CD8-positive, alpha-beta T cell (primary cell): ENCODE measurements at regions of chr6 and their contacts with region 1.

Region 1: DNA sequence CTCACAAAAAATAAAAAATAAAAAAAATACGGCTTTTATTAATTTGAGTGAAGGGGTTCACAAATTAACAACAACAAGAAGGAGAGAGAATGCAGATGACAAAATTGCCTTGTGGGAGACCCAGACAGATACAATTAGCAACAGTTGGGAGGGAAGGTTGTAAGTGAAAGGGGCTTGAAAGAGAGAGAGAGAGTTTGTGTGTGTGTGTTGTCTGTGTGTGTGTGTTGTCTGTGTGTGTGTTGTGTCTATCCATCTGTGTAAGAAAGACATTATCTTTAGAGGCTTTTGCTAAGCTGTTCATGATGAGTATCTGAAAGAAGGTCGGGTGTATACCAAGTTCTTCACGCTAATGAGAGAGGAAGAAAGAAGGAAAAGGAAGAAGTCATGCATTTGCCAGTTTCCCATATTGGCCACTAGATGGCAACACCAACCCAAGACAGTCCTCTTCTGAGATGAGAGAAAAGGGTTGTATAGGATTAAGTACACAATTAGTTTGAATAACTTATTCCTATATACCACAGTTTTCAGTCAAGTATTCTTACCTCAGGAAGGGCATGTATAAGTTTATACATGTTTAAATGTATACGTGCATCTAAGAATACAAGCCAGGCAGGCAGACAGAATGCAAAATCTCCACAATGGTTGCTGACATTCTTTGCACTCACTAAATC is 63.7 kb upstream of the CD2AP start:
- DNase-seq: peak in 7 of 9 experiments; percentile 19 to 78 (median 37)
- ATAC-seq: peak; percentile 79
- H3K4me3 ChIP-seq: peak overlapping the region; percentile 38 to 48
- H3K4me3 Mint-ChIP-seq: peak overlapping the region; percentile 88
- H3K27ac ChIP-seq: peak overlapping the region in 1 of 2 experiments; percentile 31
- H3K27ac Mint-ChIP-seq: peak overlapping the region; percentile 92
- H3K4me1 ChIP-seq: peaks cover 10% of the 10 kb centered on the region
- H3K4me1 Mint-ChIP-seq: peaks cover 17% of the 10 kb centered on the region
- H3K27me3 ChIP-seq: no peaks in the 10 kb centered on the region
- H3K27me3 Mint-ChIP-seq: no peaks in the 10 kb centered on the region
- CTCF ChIP-seq: peak; percentile 87

Region 2: DNA sequence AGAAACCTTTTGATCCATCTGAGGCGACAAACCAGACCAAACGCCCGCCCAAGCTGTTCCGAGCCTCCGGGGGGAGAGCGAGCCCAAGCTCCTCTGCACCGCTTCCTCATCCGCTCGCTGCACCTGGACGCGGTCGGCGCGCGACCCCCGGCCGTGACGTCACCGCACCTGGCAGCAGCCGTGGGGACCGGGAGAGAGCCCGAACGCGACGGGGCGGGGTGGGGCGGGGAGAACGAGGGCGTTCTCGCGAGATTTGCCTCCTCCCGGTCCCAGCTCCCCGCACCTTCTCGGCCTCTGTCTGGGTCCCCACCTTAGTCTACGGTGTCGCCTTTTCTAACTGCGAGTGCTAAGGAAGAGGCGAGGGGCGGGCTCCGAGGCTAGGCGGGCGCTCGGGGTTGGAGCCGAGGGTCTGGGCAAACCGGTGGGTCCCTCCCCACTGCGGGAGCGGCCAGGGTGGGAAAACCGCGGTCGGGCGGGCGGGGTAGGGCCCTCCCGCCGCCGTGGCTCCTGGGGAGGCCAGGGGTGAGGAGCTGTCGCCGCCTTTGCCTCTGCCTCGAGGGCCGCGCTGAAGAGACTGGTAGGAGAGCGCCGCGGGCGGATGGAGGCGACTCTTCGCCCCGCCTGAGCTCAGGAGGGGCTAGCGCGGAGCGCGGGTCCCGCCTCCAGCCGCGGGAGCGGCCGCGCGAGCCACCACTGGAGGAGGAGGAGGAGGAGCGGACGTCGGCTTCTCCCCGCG is 63.8 kb after region 1 on chr6 and contains the start of gene CD2AP:
- CTCF ChIA-PET with region 1: interaction called, 12 read pairs
- POLR2A ChIA-PET with region 1: interaction called, 22 read pairs
- intact Hi-C with region 1: loop called (anchors 1 to 2 kb)
- DNase-seq: peak; percentile 86 to 97 (median 94)
- ATAC-seq: peak; percentile 82
- H3K4me3 ChIP-seq: peak within 1 kb of the TSS; percentile 68 to 76
- H3K4me3 Mint-ChIP-seq: peak within 1 kb of the TSS; percentile 97
- H3K27ac ChIP-seq: peak within 1 kb of the TSS; percentile 89 to 94
- H3K27ac Mint-ChIP-seq: peak within 1 kb of the TSS; percentile 96
- H3K4me1 ChIP-seq: peaks cover 24% of the 10 kb centered on the region
- H3K4me1 Mint-ChIP-seq: peaks cover 46% of the 10 kb centered on the region
- H3K27me3 ChIP-seq: no peaks in the 10 kb centered on the region
- H3K27me3 Mint-ChIP-seq: no peaks in the 10 kb centered on the region
- CTCF ChIP-seq: no peak
- total RNA-seq, gene CD2AP: 43.0 to 51.1 TPM

Region 3: DNA sequence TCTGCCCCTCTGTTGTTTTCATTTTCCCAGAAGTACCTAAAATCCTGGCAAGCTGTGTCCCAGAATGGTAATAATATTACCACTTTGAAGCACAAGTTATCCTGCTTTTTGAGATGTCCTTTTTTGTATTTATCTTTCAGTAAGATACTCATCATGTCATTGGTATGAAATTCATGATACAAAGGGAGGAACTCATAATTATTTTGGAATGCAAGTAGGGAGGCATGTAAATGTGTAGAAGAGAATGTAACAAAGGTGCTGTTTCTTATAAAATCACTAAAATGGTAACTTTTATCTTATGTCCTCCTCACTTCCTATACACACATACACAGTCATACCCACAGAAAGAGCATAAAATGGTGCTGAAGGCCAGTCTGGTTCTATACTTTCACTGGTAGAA is 173.6 kb after region 1 on chr6:
- CTCF ChIA-PET with region 1: no interaction called
- POLR2A ChIA-PET with region 1: no interaction called
- intact Hi-C with region 1: loop called in 1 of 2 experiments (anchors 5 kb)
- DNase-seq: no peak
- ATAC-seq: no peak
- H3K4me3 ChIP-seq: no peak overlapping the region
- H3K4me3 Mint-ChIP-seq: no peak overlapping the region
- H3K27ac ChIP-seq: no peak overlapping the region
- H3K27ac Mint-ChIP-seq: no peak overlapping the region
- H3K4me1 ChIP-seq: no peaks in the 10 kb centered on the region
- H3K4me1 Mint-ChIP-seq: no peaks in the 10 kb centered on the region
- H3K27me3 ChIP-seq: no peaks in the 10 kb centered on the region
- H3K27me3 Mint-ChIP-seq: no peaks in the 10 kb centered on the region
- CTCF ChIP-seq: no peak

Region 4: DNA sequence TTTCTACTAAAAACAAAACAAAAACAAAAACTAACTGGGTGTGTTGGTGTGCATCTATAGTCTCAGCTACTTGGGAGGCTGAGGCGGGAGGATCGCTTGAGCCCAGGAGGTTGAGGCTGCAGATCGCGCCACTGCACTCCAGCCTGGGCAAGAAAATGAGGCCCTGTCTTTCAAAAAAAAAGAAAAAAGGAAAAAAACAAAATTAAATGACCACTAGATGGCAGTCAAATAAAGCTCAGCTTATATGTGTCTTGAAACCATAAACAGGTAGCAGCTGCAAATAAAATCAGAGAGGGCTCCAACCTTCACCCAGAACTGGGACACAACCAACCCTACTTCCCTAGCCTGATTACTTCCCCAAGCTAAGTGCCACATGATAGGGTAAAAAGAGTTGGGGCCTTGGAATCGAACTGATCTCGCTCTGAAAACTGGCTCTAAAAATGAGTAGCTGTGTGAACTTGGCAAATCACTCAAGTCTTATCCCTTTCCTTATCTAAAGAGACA is 217.4 kb after region 1 on chr6:
- CTCF ChIA-PET with region 1: interaction called, 6 read pairs
- POLR2A ChIA-PET with region 1: no interaction called
- intact Hi-C with region 1: loop called (anchors 1 to 2 kb)
- DNase-seq: peak in 2 of 9 experiments; percentile 41 to 57
- ATAC-seq: peak; percentile 59
- H3K4me3 ChIP-seq: no peak overlapping the region
- H3K4me3 Mint-ChIP-seq: no peak overlapping the region
- H3K27ac ChIP-seq: no peak overlapping the region
- H3K27ac Mint-ChIP-seq: peak overlapping the region; percentile 19
- H3K4me1 ChIP-seq: peaks cover 9% of the 10 kb centered on the region
- H3K4me1 Mint-ChIP-seq: peaks cover 23% of the 10 kb centered on the region
- H3K27me3 ChIP-seq: no peaks in the 10 kb centered on the region
- H3K27me3 Mint-ChIP-seq: no peaks in the 10 kb centered on the region
- CTCF ChIP-seq: peak; percentile 67

Region 5: GRCh38 chr6:47780510-47781356 is 366.8 kb after region 1 on chr6:
- CTCF ChIA-PET with region 1: interaction called, 47 read pairs
- POLR2A ChIA-PET with region 1: no interaction called
- intact Hi-C with region 1: loop called (anchors 1 kb)
- DNase-seq: peak in 6 of 9 experiments; percentile 7 to 65 (median 41)
- ATAC-seq: peak; percentile 82
- H3K4me3 ChIP-seq: no peak overlapping the region
- H3K4me3 Mint-ChIP-seq: no peak overlapping the region
- H3K27ac ChIP-seq: no peak overlapping the region
- H3K27ac Mint-ChIP-seq: no peak overlapping the region
- H3K4me1 ChIP-seq: no peaks in the 10 kb centered on the region
- H3K4me1 Mint-ChIP-seq: peaks cover 5% of the 10 kb centered on the region
- H3K27me3 ChIP-seq: no peaks in the 10 kb centered on the region
- H3K27me3 Mint-ChIP-seq: peaks cover 2% of the 10 kb centered on the region
- CTCF ChIP-seq: no peak

Region 6: DNA sequence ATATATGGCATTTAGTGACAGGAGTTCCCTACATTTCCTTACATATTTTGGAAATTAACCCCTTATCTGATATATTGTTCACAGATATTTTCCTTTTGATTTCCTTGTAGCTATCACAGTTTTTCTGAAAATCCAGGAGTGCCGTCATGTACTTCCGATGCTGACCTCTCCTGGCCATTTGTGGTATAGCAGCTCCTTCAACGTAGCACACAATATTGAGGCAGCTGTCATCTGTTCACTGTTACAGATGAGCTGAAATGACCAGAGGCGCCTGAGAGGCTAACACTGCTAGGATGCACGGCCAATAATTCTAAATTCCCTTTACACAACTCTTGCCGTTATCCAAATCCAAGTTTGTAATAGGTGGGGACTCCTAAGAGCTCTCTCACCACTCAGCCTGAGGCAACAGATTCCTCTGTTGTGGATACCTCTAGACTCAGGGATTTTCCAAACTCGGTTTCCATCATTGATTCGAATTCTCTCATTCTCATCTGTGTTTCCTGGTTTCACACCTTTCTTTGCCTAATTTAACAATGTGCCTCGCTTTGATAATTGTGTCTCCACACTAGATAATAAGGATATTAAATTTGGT is 1996.2 kb after region 1 on chr6:
- CTCF ChIA-PET with region 1: interaction called, 7 read pairs
- POLR2A ChIA-PET with region 1: no interaction called
- intact Hi-C with region 1: loop called in 1 of 2 experiments (anchors 5 kb)
- DNase-seq: peak; percentile 20 to 65 (median 46)
- ATAC-seq: peak; percentile 78
- H3K4me3 ChIP-seq: no peak overlapping the region
- H3K4me3 Mint-ChIP-seq: no peak overlapping the region
- H3K27ac ChIP-seq: no peak overlapping the region
- H3K27ac Mint-ChIP-seq: no peak overlapping the region
- H3K4me1 ChIP-seq: no peaks in the 10 kb centered on the region
- H3K4me1 Mint-ChIP-seq: no peaks in the 10 kb centered on the region
- H3K27me3 ChIP-seq: no peaks in the 10 kb centered on the region
- H3K27me3 Mint-ChIP-seq: peaks cover 17% of the 10 kb centered on the region
- CTCF ChIP-seq: peak; percentile 94